ENCODE measurements at regions of chr6 and their contacts with region 1.

Region 1: GRCh38 chr6:50829898-50830439 is 11.3 kb downstream of the TFAP2B start:
- DNase-seq: no peak
- ATAC-seq: no peak
- H3K4me3 ChIP-seq: no peak overlapping the region
- H3K27ac ChIP-seq: no peak overlapping the region
- H3K4me1 ChIP-seq: peaks cover 0 to 3% of the 10 kb centered on the region in 2 donors
- H3K27me3 ChIP-seq: no peaks in the 10 kb centered on the region

Region 2: GRCh38 chr6:50791900-50792508 is 38.0 kb before region 1 on chr6:
- intact Hi-C with region 1: no loop called
- DNase-seq: no peak
- ATAC-seq: no peak
- H3K4me3 ChIP-seq: no peak overlapping the region
- H3K27ac ChIP-seq: no peak overlapping the region
- H3K4me1 ChIP-seq: no peaks in the 10 kb centered on the region
- H3K27me3 ChIP-seq: no peaks in the 10 kb centered on the region

Region 3: DNA sequence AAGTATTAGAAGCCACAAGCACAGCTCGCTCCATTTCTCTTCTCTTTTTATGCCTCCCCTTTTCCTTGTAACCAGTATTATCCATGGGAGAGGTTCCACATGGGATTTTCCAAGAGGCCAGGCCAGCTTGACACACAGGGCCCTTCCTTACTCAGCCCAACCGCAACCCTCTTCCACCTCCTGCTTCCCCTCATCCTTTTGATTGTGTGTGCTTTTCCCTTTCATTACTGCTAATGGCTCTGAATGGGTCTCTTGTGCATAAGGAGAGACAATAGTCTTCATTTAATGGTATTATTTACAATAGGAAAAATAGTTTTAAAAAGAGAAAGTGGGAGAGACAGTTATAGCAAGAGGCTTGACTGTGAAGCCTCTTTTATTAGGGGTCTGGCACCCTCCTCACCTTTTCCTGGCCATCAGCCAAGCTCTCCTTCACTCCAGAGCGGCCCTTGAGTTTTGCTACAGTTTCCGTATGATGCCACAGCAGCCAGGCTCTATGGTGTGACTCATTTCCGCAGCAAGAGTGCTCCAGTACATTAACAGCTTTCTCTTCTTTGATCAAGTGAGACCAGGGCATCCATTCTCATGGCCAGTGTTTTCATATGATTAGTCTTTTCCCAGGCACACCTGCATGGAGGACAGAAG is 568.2 kb after region 1 on chr6:
- intact Hi-C with region 1: loop called in 1 of 2 experiments (anchors 5 kb)
- DNase-seq: no peak
- ATAC-seq: no peak
- H3K4me3 ChIP-seq: no peak overlapping the region
- H3K27ac ChIP-seq: no peak overlapping the region
- H3K4me1 ChIP-seq: no peaks in the 10 kb centered on the region
- H3K27me3 ChIP-seq: no peaks in the 10 kb centered on the region